Left cardiac atrium (tissue), 4 donors: ENCODE measurements at regions of chr21 and their contacts with region 1.

Region 1: DNA sequence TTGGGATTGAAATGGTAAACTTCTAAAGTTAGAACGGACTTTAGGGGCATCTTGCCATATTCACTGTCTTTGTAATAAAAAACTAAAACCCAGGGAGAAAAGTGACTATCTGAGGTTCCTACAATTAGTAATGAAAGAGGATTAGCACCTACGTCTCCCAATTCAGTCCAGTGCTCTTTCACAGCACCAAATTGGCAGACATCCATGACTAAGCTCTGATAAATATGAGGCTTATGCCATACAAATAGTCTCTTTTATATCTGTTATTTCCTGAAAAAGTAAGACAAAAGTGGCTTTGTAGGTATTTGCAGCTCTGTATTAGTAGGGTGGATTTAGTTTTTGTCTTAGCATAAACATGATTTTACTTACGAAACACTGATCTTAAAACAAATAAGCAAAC is 315.0 kb upstream of the NRIP1 start:
- DNase-seq: no peak
- ATAC-seq: peak in 1 of 2 donors; percentile 39

Region 2: GRCh38 chr21:15221799-15222386 is 157.9 kb before region 1 on chr21:
- intact Hi-C with region 1: loop called in 1 of 2 experiments (anchors 10 kb)
- DNase-seq: peak; percentile 74
- ATAC-seq: peak; percentile 91 to 98